ENCODE measurements at regions of chr12 and their contacts with region 1.

Region 1: DNA sequence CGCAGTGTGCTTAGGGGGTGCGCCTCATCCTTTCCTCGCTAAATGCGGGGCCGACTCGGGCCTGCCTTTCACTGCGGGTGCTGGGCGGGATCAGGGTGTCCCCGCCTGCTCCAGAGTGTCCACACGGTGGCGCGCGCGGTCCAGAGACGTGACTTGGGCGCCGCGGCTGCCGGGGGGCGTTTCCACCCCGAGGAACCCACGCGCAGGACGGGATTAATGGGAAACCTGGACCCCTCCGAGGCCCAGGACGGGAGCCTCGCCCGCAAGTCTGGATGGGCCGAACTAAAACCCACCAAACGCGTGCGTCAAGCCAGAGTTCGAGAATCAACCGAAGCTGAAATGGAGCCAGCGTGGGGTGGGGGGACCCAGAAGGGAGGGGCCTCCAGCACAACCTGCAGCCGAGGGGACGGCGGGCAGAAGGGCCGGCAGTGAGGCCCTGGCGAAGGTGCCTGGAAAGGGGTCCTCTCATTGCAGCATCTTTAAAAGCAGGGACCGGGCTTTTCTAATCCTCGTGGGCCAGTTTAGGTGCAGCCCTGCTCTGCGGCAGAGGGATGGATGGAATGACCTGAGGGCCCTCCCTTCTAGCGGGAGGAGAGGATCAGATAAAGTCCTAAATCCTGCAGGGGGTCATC is 93.3 kb downstream of the NINJ2 start:
- DNase-seq: peak; percentile 92
- ATAC-seq: peak; percentile 92
- H3K4me3 Mint-ChIP-seq: peak overlapping the region; percentile 81
- H3K27ac Mint-ChIP-seq: peak overlapping the region; percentile 76
- H3K4me1 Mint-ChIP-seq: peaks cover 66% of the 10 kb centered on the region
- H3K27me3 Mint-ChIP-seq: no peaks in the 10 kb centered on the region
- CTCF ChIP-seq: peak; percentile 90

Region 2: DNA sequence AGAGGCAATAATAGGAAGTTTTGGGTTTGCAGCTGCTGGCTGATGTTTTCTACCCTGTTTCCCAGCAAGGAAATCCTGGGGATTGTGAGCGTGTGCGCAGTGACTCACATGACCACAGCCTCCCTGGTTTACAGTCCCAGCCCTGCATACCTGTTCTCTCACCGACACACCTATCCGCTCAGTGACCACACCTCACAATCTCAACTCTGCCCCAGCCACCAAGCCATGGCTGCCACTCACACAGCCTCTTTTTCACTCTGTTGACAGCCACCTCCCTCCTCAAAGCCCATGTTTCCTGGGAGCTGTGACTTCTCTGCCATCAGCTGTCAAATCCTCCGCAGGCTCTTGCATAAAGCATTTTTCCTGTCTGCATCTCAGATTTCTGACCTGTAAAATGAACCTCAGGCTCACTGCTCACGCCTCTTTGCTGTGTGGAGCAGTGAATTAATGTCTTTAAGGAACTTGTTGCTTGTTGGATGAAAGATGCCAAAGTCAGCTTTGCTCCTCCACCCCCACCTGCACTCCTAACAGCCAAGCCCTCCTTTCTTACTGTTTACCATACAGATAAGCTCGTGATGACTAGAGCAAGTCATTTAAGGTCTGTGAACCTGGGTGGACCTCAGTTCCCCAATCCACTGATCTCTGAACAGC is 66.7 kb before region 1 on chr12:
- CTCF ChIA-PET with region 1: no interaction called
- POLR2A ChIA-PET with region 1: no interaction called
- intact Hi-C with region 1: no loop called
- DNase-seq: no peak
- ATAC-seq: no peak
- H3K4me3 Mint-ChIP-seq: no peak overlapping the region
- H3K27ac Mint-ChIP-seq: no peak overlapping the region
- H3K4me1 Mint-ChIP-seq: no peaks in the 10 kb centered on the region
- H3K27me3 Mint-ChIP-seq: peaks cover 3% of the 10 kb centered on the region
- CTCF ChIP-seq: no peak

Region 3: GRCh38 chr12:553205-554000 is 16.5 kb before region 1 on chr12:
- CTCF ChIA-PET with region 1: interaction called, 14 read pairs
- POLR2A ChIA-PET with region 1: no interaction called
- intact Hi-C with region 1: no loop called
- DNase-seq: peak; percentile 70
- ATAC-seq: peak; percentile 84
- H3K4me3 Mint-ChIP-seq: peak overlapping the region; percentile 85
- H3K27ac Mint-ChIP-seq: peak overlapping the region; percentile 87
- H3K4me1 Mint-ChIP-seq: peaks cover 42% of the 10 kb centered on the region
- H3K27me3 Mint-ChIP-seq: no peaks in the 10 kb centered on the region
- CTCF ChIP-seq: no peak

Region 4: GRCh38 chr12:949453-950191 is 379.7 kb after region 1 on chr12 and contains the start of gene RAD52:
- CTCF ChIA-PET with region 1: interaction called, 7 read pairs
- POLR2A ChIA-PET with region 1: interaction called, 4 read pairs
- intact Hi-C with region 1: loop called (anchors 10 kb)
- DNase-seq: peak; percentile 99
- ATAC-seq: peak; percentile 87
- H3K4me3 Mint-ChIP-seq: peak within 1 kb of the TSS; percentile 98
- H3K27ac Mint-ChIP-seq: peak within 1 kb of the TSS; percentile 96
- H3K4me1 Mint-ChIP-seq: peaks cover 23% of the 10 kb centered on the region
- H3K27me3 Mint-ChIP-seq: no peaks in the 10 kb centered on the region
- CTCF ChIP-seq: peak; percentile 95
- total RNA-seq, gene RAD52: 14.9 to 16.3 TPM

Measured in activated CD8-positive, alpha-beta T cell treated with anti-CD3 and anti-CD28 coated beads for 36 hours (primary cell).